A673 (cell line): ENCODE measurements at regions of chr2 and their contacts with region 1.

Region 1: DNA sequence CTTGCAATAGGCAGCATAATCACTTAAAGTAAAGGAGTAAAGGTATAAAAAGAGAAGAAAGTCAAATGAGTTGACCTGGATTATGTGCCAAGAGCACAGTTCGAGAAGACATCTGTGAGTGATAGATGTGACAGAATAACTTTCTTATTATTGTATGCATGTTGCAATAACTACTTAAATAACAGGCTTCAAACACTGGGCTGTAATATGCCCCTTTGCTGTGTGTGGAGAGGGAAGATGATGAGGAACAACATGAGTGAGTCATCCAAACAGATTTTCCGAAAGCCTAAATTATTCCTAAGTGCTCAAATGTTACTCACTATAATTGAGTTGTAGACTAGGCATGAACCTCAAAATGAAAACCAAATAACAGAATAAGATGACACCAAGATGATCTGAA is 328.1 kb downstream of the EXOC6B start:
- DNase-seq: peak; percentile 49
- H3K4me3 ChIP-seq: no peak overlapping the region
- H3K27ac ChIP-seq: peak overlapping the region; percentile 9
- H3K4me1 ChIP-seq: peaks cover 10% of the 10 kb centered on the region
- H3K27me3 ChIP-seq: no peaks in the 10 kb centered on the region
- CTCF ChIP-seq: no peak

Region 2: DNA sequence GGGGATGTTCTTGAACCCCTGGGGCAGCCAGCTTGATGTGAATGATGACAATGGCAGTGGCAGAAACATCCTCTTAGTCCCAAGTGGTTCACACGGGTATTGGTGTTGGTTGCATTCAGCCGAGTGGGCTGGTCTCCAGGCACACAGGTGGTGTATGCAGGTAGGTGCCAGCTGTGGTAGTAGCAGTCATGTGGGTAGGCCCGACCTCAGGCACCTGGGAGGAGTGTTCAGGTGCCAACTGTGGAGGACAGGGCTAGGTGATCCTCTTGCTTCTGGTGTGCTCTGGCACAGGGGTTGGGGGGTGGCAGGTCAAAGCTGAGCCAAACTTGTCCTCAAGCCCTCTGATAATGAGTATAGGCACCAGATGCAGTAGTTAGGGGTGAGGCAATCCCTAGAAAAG is 22.5 kb before region 1 on chr2:
- CTCF ChIA-PET with region 1: no interaction called
- POLR2A ChIA-PET with region 1: no interaction called
- intact Hi-C with region 1: no loop called
- DNase-seq: no peak
- H3K4me3 ChIP-seq: no peak overlapping the region
- H3K27ac ChIP-seq: no peak overlapping the region
- H3K4me1 ChIP-seq: no peaks in the 10 kb centered on the region
- H3K27me3 ChIP-seq: no peaks in the 10 kb centered on the region
- CTCF ChIP-seq: no peak

Region 3: DNA sequence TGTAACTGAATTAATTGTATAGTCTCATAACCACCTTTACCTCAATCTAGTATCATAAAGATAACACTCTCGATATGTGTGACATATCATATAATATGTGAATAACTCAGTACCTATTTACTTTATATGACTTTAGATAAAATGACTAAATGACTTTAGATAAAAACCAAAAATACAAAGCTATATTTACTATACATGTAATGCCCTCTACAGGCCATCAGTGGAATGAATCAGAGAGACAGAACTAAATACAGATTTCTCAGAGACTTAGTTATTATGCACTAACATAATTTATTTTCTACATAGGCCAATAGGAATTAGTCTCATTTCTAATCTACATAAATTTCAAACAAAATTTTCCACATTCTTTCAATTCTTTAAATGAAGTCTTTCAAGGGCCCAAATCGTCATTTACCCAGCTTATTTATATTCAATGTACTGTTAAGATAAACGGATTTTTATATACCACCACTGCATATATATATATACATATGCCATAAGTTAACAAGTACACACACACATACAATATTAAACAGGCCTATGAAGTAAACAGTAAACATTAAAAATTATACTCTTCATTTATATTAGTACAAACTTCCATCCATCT is 108.2 kb after region 1 on chr2:
- CTCF ChIA-PET with region 1: no interaction called
- POLR2A ChIA-PET with region 1: interaction called, 17 read pairs
- intact Hi-C with region 1: no loop called
- DNase-seq: peak; percentile 56
- H3K4me3 ChIP-seq: no peak overlapping the region
- H3K27ac ChIP-seq: peak overlapping the region; percentile 76
- H3K4me1 ChIP-seq: peaks cover 37% of the 10 kb centered on the region
- H3K27me3 ChIP-seq: no peaks in the 10 kb centered on the region
- CTCF ChIP-seq: peak; percentile 84